Activated CD4-positive, alpha-beta memory T cell treated with anti-CD3 and anti-CD28 coated beads for 36 hours (primary cell): ENCODE measurements at regions of chr7 and their contacts with region 1.

Region 1: DNA sequence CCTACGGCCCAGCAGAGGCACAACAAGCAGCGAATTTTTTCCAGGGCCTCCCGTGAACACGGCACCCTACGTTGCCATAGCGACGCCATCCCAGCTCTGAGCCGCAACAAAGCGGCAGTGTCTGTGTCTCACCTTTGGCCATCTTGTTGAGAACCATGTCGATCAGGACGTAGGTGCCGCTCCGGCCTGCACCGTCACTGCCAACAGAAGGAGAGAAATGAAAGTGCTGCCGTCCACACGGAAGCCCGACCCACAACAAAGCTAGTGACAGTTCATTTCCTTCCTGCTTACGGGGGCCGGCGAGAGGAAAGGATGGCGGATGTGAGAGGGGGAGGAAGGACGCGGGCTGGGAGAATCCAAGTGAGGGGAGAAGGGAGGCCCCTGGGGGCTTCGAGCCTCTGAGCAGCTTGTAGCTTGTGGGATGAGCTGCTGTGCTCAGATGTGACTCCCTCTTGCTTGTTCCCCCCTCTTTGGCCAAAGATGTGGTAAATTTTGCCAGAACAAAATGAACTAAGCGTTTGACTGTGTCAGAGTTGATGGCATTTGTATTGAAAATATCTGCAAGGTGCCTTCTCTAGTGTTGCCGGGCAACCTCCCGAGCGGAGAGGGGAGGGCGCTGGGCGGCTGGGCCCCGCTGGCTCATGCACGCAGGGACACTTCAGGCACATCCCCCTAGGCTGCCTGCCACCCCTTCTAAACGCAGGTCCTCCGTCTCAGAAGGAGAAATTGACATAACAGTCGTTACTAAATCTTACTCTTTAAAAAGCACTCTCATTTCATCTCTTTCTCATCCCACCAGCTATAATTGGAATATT is 232.2 kb downstream of the DNAJB6 start:
- DNase-seq: peak; percentile 74
- H3K4me3 Mint-ChIP-seq: peak overlapping the region; percentile 85
- H3K27ac Mint-ChIP-seq: peak overlapping the region; percentile 55
- H3K4me1 Mint-ChIP-seq: peaks cover 40% of the 10 kb centered on the region
- H3K27me3 Mint-ChIP-seq: no peaks in the 10 kb centered on the region

Region 2: GRCh38 chr7:157502701-157503111 is 66.3 kb before region 1 on chr7:
- CTCF ChIA-PET with region 1: no interaction called
- POLR2A ChIA-PET with region 1: no interaction called
- intact Hi-C with region 1: loop called (anchors 2 kb)
- DNase-seq: peak; percentile 80
- H3K4me3 Mint-ChIP-seq: peak overlapping the region; percentile 59
- H3K27ac Mint-ChIP-seq: peak overlapping the region; percentile 38
- H3K4me1 Mint-ChIP-seq: peaks cover 26% of the 10 kb centered on the region
- H3K27me3 Mint-ChIP-seq: peaks cover 4% of the 10 kb centered on the region